Mammary epithelial cell (primary cell): ENCODE measurements at regions of chr9 and their contacts with region 1.

Region 1: DNA sequence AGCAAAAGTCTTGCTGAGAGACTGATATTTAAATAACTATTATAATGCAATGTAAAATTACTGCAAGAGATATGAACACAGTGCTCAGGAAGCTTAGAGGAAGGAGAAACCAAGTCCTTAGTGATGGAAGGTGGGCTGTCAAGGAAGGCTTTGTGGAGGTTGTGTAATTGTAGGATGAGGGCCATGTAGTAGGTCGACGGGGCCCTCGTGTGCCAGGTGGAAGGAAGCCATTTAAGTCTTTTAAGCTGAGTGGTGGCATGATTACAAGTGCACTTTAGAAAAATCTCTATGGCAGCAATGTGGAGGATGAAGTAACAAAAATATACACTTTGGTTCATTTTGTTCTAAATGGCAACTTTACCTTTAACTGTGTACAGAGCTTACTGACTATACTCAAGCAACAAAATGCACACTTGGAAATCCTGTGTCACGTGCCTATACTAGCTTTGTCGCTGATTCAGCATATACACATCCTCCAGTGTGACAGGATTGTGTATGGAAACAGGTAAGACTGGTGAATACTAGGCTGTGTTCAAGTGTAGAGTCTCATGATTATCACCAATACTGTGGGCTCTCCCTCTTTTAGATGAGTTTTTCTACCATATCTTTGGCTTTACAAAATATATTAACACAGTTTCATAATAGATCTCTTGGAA is 78.6 kb downstream of the TMC1 start:
- DNase-seq: no peak
- H3K4me3 ChIP-seq: no peak overlapping the region
- H3K27ac ChIP-seq: no peak overlapping the region
- H3K4me1 ChIP-seq: no peaks in the 10 kb centered on the region
- H3K27me3 ChIP-seq: no peaks in the 10 kb centered on the region
- CTCF ChIP-seq: no peak

Region 2: DNA sequence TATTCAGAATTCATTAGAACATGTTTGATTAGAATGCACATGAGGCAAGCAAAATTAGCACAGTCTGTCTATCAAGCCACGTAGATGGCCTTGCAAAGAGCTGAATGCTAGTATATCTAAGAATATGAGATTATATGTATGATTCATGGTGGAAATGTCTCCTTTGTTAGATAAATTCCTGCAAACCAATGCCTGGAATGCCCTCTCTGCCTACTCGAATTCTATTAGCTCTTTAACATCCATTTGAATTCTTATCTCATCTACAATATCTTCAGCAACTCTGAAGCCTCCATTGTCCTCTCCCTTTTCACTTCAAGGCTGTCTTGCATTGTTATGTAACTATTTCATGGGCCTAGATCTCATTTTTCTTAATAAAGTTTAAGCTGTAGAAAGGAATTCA is 126.9 kb after region 1 on chr9:
- CTCF ChIA-PET with region 1: no interaction called
- dilution Hi-C with region 1: loop called (anchors 10 kb)
- in situ Hi-C with region 1: no loop called
- intact Hi-C with region 1: no loop called
- DNase-seq: no peak
- H3K4me3 ChIP-seq: no peak overlapping the region
- H3K27ac ChIP-seq: no peak overlapping the region
- H3K4me1 ChIP-seq: no peaks in the 10 kb centered on the region
- H3K27me3 ChIP-seq: no peaks in the 10 kb centered on the region
- CTCF ChIP-seq: no peak

Region 3: DNA sequence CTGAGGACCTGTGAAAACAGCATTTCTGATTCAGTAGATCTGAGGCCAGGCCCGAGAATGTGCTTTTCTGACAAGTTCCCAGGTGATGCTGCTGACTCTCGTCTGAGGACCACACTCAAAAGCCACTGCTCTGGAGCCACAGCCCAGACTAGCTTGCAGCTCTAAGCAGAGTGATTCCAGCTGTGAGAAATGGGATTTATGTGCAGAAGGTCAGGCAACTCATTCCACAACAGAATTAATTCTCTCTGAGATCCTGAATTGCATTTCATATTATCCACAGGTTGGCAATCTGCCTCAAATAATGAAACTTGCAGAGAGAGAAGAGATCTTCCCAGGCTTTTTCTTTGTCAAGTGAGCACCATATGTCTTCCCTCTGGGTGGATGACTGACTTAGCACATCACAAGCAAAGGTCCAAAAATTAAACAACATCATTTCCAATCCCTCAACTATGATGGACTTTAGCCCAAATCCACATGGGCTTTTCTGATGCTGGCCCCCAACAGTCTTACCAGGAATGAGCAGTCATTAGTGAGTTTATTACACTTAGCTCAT is 212.6 kb after region 1 on chr9:
- CTCF ChIA-PET with region 1: no interaction called
- dilution Hi-C with region 1: no loop called
- in situ Hi-C with region 1: no loop called
- intact Hi-C with region 1: loop called (anchors 5 kb)
- DNase-seq: no peak
- H3K4me3 ChIP-seq: no peak overlapping the region
- H3K27ac ChIP-seq: no peak overlapping the region
- H3K4me1 ChIP-seq: no peaks in the 10 kb centered on the region
- H3K27me3 ChIP-seq: no peaks in the 10 kb centered on the region
- CTCF ChIP-seq: no peak

Region 4: GRCh38 chr9:73023025-73023541 is 423.1 kb after region 1 on chr9:
- CTCF ChIA-PET with region 1: no interaction called
- dilution Hi-C with region 1: no loop called
- in situ Hi-C with region 1: no loop called
- intact Hi-C with region 1: no loop called
- DNase-seq: peak; percentile 48
- H3K4me3 ChIP-seq: no peak overlapping the region
- H3K27ac ChIP-seq: no peak overlapping the region
- H3K4me1 ChIP-seq: no peaks in the 10 kb centered on the region
- H3K27me3 ChIP-seq: no peaks in the 10 kb centered on the region
- CTCF ChIP-seq: peak; percentile 87